Naive thymus-derived CD4-positive, alpha-beta T cell (primary cell): ENCODE measurements at regions of chr4 and their contacts with region 1.

Region 1: GRCh38 chr4:7761720-7762119 is 177.9 kb downstream of the AFAP1 start:
- DNase-seq: peak in 8 of 9 donors; percentile 33 to 65 (median 52)
- ATAC-seq: peak; percentile 74
- H3K4me3 ChIP-seq: no peak overlapping the region
- H3K4me3 Mint-ChIP-seq: peak overlapping the region in 5 of 10 donors; percentile 27 to 49 (median 37)
- H3K27ac ChIP-seq: peak overlapping the region; percentile 10
- H3K27ac Mint-ChIP-seq: peak overlapping the region; percentile 47 to 100 (median 92)
- H3K4me1 ChIP-seq: peaks cover 18 to 30% of the 10 kb centered on the region in 2 donors
- H3K4me1 Mint-ChIP-seq: peaks cover 13 to 49% (median 37%) of the 10 kb centered on the region in 7 donors
- H3K27me3 ChIP-seq: no peaks in the 10 kb centered on the region
- H3K27me3 Mint-ChIP-seq: no peaks in the 10 kb centered on the region

Region 2: GRCh38 chr4:7719354-7720174 is 42.2 kb before region 1 on chr4:
- CTCF ChIA-PET with region 1: interaction called, 3 read pairs
- POLR2A ChIA-PET with region 1: no interaction called
- intact Hi-C with region 1: loop called in 1 of 2 experiments (anchors 5 kb)
- DNase-seq: peak; percentile 8 to 67 (median 48)
- ATAC-seq: peak; percentile 73
- H3K4me3 ChIP-seq: no peak overlapping the region
- H3K4me3 Mint-ChIP-seq: peak overlapping the region in 3 of 10 donors; percentile 21 to 45 (median 41)
- H3K27ac ChIP-seq: no peak overlapping the region
- H3K27ac Mint-ChIP-seq: peak overlapping the region in 1 of 9 donors; percentile 27
- H3K4me1 ChIP-seq: no peaks in the 10 kb centered on the region
- H3K4me1 Mint-ChIP-seq: peaks cover 0 to 11% (median 6%) of the 10 kb centered on the region in 7 donors
- H3K27me3 ChIP-seq: peaks cover 0 to 3% of the 10 kb centered on the region in 2 donors
- H3K27me3 Mint-ChIP-seq: peaks cover 0 to 33% (median 7%) of the 10 kb centered on the region in 5 donors

Region 3: DNA sequence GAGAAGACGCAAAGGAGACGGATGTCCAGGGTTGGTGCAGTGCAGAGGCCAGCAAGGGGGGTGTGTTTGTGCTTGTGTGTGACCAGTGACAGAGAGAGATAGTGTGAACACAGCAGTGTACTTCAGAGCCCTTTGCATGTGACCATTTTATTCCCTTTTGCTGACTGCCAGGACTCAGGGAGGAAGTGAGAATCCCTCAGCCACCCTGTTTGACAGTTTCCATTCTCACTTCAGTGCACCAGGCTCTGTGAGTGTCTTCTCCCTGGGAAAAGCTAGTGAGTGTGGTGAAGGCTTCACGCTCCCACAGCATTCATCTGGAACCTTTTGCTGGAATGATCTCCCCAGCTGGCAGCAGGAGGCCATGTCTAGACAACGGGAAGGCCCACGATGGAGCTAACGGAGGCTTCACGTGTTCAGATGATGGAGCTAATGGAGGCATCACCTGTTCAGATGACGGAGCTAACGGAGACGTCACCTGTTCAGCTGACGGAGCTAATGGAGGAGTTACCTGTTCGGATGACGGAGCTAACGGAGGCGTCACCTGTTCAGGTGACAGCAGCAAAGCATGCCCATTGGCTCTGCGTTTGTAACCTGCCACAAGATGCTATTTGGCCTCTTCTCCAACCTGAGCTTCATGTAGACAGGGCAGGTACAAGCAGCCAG is 17.4 kb before region 1 on chr4:
- CTCF ChIA-PET with region 1: no interaction called
- POLR2A ChIA-PET with region 1: interaction called, 15 read pairs
- intact Hi-C with region 1: loop called in 1 of 2 experiments (anchors 1 kb)
- DNase-seq: no peak
- ATAC-seq: peak; percentile 36
- H3K4me3 ChIP-seq: no peak overlapping the region
- H3K4me3 Mint-ChIP-seq: no peak overlapping the region
- H3K27ac ChIP-seq: no peak overlapping the region
- H3K27ac Mint-ChIP-seq: peak overlapping the region in 1 of 9 donors; percentile 23
- H3K4me1 ChIP-seq: no peaks in the 10 kb centered on the region
- H3K4me1 Mint-ChIP-seq: peaks cover 6 to 28% (median 18%) of the 10 kb centered on the region in 7 donors
- H3K27me3 ChIP-seq: no peaks in the 10 kb centered on the region
- H3K27me3 Mint-ChIP-seq: no peaks in the 10 kb centered on the region

Region 4: GRCh38 chr4:7750523-7750922 is 11.2 kb before region 1 on chr4:
- CTCF ChIA-PET with region 1: interaction called, 5 read pairs
- POLR2A ChIA-PET with region 1: interaction called, 15 read pairs
- intact Hi-C with region 1: loop called in 1 of 2 experiments (anchors 1 kb)
- DNase-seq: no peak
- ATAC-seq: no peak
- H3K4me3 ChIP-seq: no peak overlapping the region
- H3K4me3 Mint-ChIP-seq: peak overlapping the region in 2 of 10 donors; percentile 56 to 71
- H3K27ac ChIP-seq: peak overlapping the region; percentile 57
- H3K27ac Mint-ChIP-seq: peak overlapping the region in 5 of 9 donors; percentile 76 to 96 (median 90)
- H3K4me1 ChIP-seq: peaks cover 0 to 8% of the 10 kb centered on the region in 2 donors
- H3K4me1 Mint-ChIP-seq: peaks cover 8 to 34% (median 25%) of the 10 kb centered on the region in 7 donors
- H3K27me3 ChIP-seq: no peaks in the 10 kb centered on the region
- H3K27me3 Mint-ChIP-seq: no peaks in the 10 kb centered on the region

Region 5: GRCh38 chr4:7777031-7777710 is 15.5 kb after region 1 on chr4:
- CTCF ChIA-PET with region 1: no interaction called
- POLR2A ChIA-PET with region 1: no interaction called
- intact Hi-C with region 1: no loop called
- DNase-seq: no peak
- ATAC-seq: no peak
- H3K4me3 ChIP-seq: no peak overlapping the region
- H3K4me3 Mint-ChIP-seq: no peak overlapping the region
- H3K27ac ChIP-seq: no peak overlapping the region
- H3K27ac Mint-ChIP-seq: peak overlapping the region in 1 of 9 donors; percentile 33
- H3K4me1 ChIP-seq: peaks cover 0 to 7% of the 10 kb centered on the region in 2 donors
- H3K4me1 Mint-ChIP-seq: peaks cover 12 to 55% (median 34%) of the 10 kb centered on the region in 7 donors
- H3K27me3 ChIP-seq: no peaks in the 10 kb centered on the region
- H3K27me3 Mint-ChIP-seq: no peaks in the 10 kb centered on the region

Region 6: DNA sequence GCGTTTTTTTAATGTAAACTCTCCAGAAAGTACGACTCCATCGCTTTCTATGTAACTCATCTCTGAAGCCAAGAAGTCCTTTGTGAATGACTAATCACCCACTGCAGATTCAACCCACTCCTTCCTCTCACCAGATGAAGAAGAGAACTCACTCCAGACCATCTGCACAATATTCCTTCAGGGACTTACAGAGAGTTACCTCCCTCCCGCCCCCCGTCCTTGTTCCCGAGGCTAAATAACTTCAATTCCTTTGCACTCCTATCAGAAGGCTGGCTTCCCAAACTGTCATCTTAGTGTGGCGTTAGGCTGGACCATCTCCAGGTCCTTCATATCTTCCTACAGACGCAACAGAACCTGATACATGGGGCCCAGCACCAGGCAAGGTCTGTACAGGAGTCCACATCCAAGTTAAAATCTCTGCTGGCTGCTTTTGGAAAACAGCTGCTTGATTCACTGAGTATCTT is 95.5 kb after region 1 on chr4:
- CTCF ChIA-PET with region 1: no interaction called
- POLR2A ChIA-PET with region 1: no interaction called
- intact Hi-C with region 1: loop called in 1 of 2 experiments (anchors 10 kb)
- DNase-seq: no peak
- ATAC-seq: no peak
- H3K4me3 ChIP-seq: no peak overlapping the region
- H3K4me3 Mint-ChIP-seq: peak overlapping the region in 8 of 10 donors; percentile 17 to 73 (median 44)
- H3K27ac ChIP-seq: no peak overlapping the region
- H3K27ac Mint-ChIP-seq: peak overlapping the region in 8 of 9 donors; percentile 21 to 96 (median 90)
- H3K4me1 ChIP-seq: peaks cover 29 to 48% of the 10 kb centered on the region in 2 donors
- H3K4me1 Mint-ChIP-seq: peaks cover 36 to 74% (median 66%) of the 10 kb centered on the region in 7 donors
- H3K27me3 ChIP-seq: no peaks in the 10 kb centered on the region
- H3K27me3 Mint-ChIP-seq: no peaks in the 10 kb centered on the region

Region 7: GRCh38 chr4:8440492-8441341 is 679.0 kb after region 1 on chr4 and contains the starts of genes ACOX3 and TRMT44:
- CTCF ChIA-PET with region 1: interaction called, 3 read pairs
- POLR2A ChIA-PET with region 1: interaction called, 3 read pairs
- intact Hi-C with region 1: loop called in 1 of 2 experiments (anchors 10 kb)
- DNase-seq: peak; percentile 89 to 100 (median 97)
- ATAC-seq: peak; percentile 97
- H3K4me3 ChIP-seq: peak within 1 kb of the TSS; percentile 92
- H3K4me3 Mint-ChIP-seq: peak within 1 kb of the TSS; percentile 93 to 100 (median 96)
- H3K27ac ChIP-seq: peak within 1 kb of the TSS; percentile 89
- H3K27ac Mint-ChIP-seq: peak within 1 kb of the TSS; percentile 98 to 100 (median 99)
- H3K4me1 ChIP-seq: peaks cover 31 to 37% of the 10 kb centered on the region in 2 donors
- H3K4me1 Mint-ChIP-seq: peaks cover 62 to 89% (median 81%) of the 10 kb centered on the region in 7 donors
- H3K27me3 ChIP-seq: no peaks in the 10 kb centered on the region
- H3K27me3 Mint-ChIP-seq: peaks cover 0 to 2% (median 0%) of the 10 kb centered on the region in 5 donors
- total RNA-seq, gene ACOX3: 10.9 to 20.5 (median 14.8) TPM
- total RNA-seq, gene TRMT44: 28.5 to 33.7 (median 29.6) TPM